ENCODE measurements at regions of chr2 and their contacts with region 1.

Region 1: DNA sequence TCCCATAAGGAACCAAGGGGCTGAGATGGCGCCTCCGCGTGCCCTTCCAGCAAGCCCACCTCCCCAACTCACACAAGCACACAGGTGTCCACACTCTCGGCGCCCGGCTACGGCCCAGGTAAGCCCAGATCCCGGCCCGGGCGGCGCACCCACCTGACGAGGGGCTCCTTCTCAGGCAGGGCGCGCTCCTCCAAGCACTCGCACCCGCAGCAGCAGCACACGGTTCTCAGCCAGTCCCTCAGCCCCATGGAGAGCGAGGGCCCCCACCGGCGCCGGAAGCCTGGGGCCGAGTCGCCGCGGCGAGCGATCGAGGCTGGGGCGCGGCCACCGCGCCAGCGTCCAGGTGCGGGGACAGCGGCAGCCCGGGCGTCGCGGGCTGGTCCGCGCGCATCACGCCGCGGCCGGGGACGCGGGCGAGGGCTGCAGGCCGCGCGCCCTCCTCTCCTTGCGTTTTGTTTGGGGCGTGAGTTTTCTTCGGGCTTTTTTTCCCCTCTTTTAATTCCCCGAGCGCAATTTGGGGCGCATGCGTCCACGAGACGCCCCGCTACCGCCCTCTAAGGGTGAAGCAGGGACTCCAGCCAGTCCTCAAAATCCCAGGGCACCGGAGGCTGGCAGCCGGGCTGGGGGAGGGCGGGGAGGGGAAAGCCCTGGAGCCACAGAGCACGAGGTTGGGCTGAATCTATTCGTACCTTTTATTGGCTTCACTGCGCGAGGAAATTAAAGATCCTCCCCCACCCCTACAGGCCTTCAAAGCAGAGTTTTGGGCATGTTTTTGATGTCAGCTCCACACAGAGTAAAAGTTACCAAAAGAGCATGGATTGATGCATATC is at the start of gene MREG:
- DNase-seq: peak; percentile 91
- H3K4me3 Mint-ChIP-seq: peak within 1 kb of the TSS; percentile 88
- H3K27ac Mint-ChIP-seq: peak within 1 kb of the TSS; percentile 46
- H3K4me1 Mint-ChIP-seq: peaks cover 50% of the 10 kb centered on the region
- H3K27me3 Mint-ChIP-seq: no peaks in the 10 kb centered on the region
- total RNA-seq, gene MREG: 10.2 to 10.4 TPM

Region 2: DNA sequence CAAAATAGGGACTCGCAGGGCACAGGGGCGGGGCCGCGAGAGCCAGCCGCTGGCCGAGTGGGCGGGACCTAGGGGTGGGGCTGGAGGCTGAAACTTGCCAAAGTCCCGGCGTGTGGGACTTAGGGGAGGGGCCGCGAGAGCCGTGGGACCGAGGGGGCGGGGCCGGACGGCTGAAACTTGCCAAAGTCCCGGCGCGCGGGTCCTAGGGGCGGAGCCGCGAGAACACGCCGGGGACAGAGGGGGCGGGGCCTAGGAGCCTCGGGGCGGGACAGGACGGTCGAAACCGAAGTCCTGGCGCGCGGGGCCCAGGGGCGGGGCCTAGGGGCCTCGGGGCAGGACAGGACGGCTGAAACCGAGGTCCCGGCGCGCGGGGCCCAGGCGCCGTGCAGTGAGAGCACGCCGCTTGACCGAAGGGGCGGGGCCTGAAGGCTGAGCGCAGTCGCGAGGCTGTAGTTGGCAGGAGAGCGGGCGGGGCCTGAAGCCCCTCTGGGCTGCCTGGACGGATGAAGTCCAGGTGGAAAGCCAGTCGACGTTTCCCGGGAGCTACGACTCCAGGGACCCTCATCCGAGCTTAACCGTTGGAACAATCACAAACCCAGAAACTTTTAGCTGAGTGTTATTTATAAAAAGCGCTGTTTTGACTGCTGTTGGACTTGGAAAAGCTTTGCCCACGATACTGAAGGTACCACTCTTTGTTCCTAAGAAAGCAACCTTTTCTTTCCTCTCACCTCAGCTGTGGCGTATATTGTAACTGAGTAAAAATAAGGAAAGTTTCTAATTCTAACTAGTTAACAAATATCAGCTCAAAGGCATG is 1203.3 kb before region 1 on chr2:
- CTCF ChIA-PET with region 1: no interaction called
- POLR2A ChIA-PET with region 1: no interaction called
- intact Hi-C with region 1: loop called (anchors 10 kb)
- DNase-seq: peak; percentile 100
- H3K4me3 Mint-ChIP-seq: peak overlapping the region; percentile 99
- H3K27ac Mint-ChIP-seq: peak overlapping the region; percentile 99
- H3K4me1 Mint-ChIP-seq: peaks cover 32% of the 10 kb centered on the region
- H3K27me3 Mint-ChIP-seq: peaks cover 3% of the 10 kb centered on the region

Region 3: GRCh38 chr2:215435809-215436704 is 577.2 kb before region 1 on chr2 and contains the start of gene FN1:
- CTCF ChIA-PET with region 1: no interaction called
- POLR2A ChIA-PET with region 1: no interaction called
- intact Hi-C with region 1: loop called (anchors 10 kb)
- DNase-seq: peak; percentile 69
- H3K4me3 Mint-ChIP-seq: peak within 1 kb of the TSS; percentile 72
- H3K27ac Mint-ChIP-seq: no peak within 1 kb of the TSS
- H3K4me1 Mint-ChIP-seq: peaks cover 15% of the 10 kb centered on the region
- H3K27me3 Mint-ChIP-seq: peaks cover 55% of the 10 kb centered on the region
- total RNA-seq, gene FN1: 0.50 to 0.53 TPM

Region 4: DNA sequence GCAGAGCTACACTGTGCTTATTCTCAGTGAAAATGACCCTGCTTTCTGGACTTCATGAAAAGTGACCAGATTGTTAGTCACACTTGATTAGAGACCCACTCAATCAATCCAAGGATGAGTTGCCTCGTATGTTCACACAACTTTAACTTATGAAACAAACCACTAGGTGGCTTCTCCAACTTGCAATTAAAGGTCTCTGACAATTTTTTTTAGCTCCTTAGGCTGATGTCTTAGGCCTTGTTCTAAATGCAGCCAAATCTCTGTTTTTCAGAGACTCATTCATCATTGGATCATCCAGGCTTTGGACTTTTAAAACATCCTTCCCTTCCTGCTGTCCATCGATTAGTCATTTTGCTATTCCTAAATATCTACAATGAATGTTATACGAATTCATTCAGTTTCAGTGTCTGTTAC is 63.3 kb before region 1 on chr2:
- CTCF ChIA-PET with region 1: interaction called, 188 read pairs
- POLR2A ChIA-PET with region 1: no interaction called
- intact Hi-C with region 1: loop called (anchors 2 kb)
- DNase-seq: no peak
- H3K4me3 Mint-ChIP-seq: no peak overlapping the region
- H3K27ac Mint-ChIP-seq: no peak overlapping the region
- H3K4me1 Mint-ChIP-seq: peaks cover 3% of the 10 kb centered on the region
- H3K27me3 Mint-ChIP-seq: no peaks in the 10 kb centered on the region

Region 5: DNA sequence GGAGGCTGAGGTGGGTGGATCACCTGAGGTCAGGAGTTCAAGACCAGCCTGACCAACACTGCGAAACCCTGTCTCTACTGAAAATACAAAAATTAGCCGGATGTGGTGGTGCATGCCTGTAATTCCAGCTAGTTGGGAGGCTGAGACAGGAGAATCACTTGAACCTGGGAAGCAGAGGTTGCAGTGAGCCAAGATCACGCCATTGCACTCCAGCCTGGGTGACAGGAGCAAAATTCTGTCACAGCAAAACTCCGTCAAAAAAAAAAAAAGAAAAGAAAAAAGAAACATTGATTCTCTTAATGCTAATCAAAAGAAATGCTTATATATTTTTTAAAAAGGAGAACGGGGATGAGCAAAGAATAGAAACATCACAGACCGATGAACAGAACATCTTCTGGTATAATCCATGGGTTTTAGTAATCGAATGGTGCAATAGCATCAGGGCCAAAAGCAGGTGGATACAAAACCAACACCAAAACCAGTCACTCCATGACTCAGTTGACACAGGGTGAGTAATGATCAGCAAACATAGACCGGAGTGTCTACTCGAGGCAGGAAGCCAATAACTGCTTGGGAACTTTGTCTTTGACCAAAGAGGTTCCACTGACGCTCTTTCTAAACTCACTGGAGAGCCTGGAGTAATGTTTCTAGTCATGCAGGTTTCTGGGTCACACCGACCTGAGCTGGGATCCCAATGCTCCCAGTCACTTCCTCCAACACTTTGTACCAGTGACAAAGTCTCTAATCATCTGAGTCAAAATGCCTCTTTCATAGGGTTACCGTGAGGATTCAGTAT is 31.0 kb before region 1 on chr2:
- CTCF ChIA-PET with region 1: interaction called, 4 read pairs
- POLR2A ChIA-PET with region 1: interaction called, 3 read pairs
- intact Hi-C with region 1: loop called (anchors 1 kb)
- DNase-seq: peak; percentile 69
- H3K4me3 Mint-ChIP-seq: no peak overlapping the region
- H3K27ac Mint-ChIP-seq: no peak overlapping the region
- H3K4me1 Mint-ChIP-seq: peaks cover 36% of the 10 kb centered on the region
- H3K27me3 Mint-ChIP-seq: no peaks in the 10 kb centered on the region

Measured in activated CD4-positive, alpha-beta memory T cell treated with anti-CD3 and anti-CD28 coated beads for 36 hours (primary cell).